GM12878 (cell line): ENCODE measurements at regions of chr5 and their contacts with region 1.

Region 1: GRCh38 chr5:33440482-33441240 is at the start of gene TARS1:
- DNase-seq: peak; percentile 100
- ATAC-seq: peak; percentile 94
- H3K4me3 ChIP-seq: peak within 1 kb of the TSS; percentile 96
- H3K27ac ChIP-seq: peak within 1 kb of the TSS; percentile 92
- H3K4me1 ChIP-seq: no peaks in the 10 kb centered on the region
- H3K27me3 ChIP-seq: no peaks in the 10 kb centered on the region
- CTCF ChIP-seq: no peak
- EP300 ChIP-seq: 0 out of 4 replicates have a peak, but pooled peaks of 1 of the 2 experiments have one; percentile 21
- POLR2A ChIP-seq: peak; percentile 95
- RAD21 ChIP-seq: no peak
- polyA plus RNA-seq, gene TARS1: 163 to 244 TPM

Region 2: GRCh38 chr5:33379757-33380156 is 60.9 kb before region 1 on chr5:
- CTCF ChIA-PET with region 1: no interaction called
- POLR2A ChIA-PET with region 1: no interaction called
- RAD21 ChIA-PET with region 1: no interaction called
- SMC1A ChIA-PET with region 1: no interaction called
- in situ Hi-C with region 1: no loop called
- intact Hi-C with region 1: no loop called
- DNase-seq: no peak
- ATAC-seq: peak; percentile 27; the same call in 1 of the 3 replicates
- H3K4me3 ChIP-seq: no peak overlapping the region
- H3K27ac ChIP-seq: no peak overlapping the region
- H3K4me1 ChIP-seq: no peaks in the 10 kb centered on the region
- H3K27me3 ChIP-seq: no peaks in the 10 kb centered on the region
- CTCF ChIP-seq: peak; percentile 34 to 54 (median 36); a peak in 5 of 6 replicates
- EP300 ChIP-seq: no peak
- POLR2A ChIP-seq: no peak
- RAD21 ChIP-seq: peak; percentile 72

Region 3: DNA sequence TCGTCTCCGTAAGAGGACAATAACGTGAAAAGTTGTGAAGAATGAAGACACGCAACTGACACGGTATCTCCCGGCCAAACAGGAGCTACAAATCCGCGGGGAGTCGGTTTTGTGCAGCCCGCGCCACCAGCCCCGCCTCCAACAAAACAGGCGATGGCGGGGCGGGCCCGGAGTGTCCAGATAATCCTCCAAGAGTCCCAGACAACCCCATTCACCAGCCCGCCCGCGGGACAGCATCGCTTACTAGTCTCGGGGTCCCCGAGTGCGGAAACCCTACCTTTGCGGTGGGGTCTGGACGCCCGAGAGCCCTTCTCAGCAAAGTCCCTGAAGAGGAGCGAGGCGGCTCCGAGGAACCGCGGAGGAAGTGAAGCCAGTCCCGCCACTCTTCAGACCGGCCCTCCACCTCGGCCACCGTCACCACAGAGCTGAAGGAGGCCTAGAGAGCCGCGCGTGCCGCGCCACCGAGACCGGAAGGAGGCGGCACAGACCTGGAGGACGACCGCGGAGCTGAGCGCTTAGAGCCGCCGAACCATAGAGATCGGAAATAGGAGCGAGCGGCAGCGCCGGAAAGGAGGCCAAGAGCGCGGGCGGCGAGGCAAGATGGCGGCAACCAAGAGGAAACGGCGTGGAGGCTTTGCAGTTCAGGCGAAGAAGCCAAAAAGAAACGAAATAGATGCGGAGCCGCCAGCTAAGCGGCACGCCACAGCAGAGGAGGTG is 1474.6 kb after region 1 on chr5 and contains the starts of genes BRIX1 and RAD1:
- CTCF ChIA-PET with region 1: no interaction called
- POLR2A ChIA-PET with region 1: no interaction called
- RAD21 ChIA-PET with region 1: no interaction called
- SMC1A ChIA-PET with region 1: no interaction called
- in situ Hi-C with region 1: loop called (anchors 10 kb)
- intact Hi-C with region 1: no loop called
- DNase-seq: peak; percentile 86
- ATAC-seq: peak; percentile 96
- H3K4me3 ChIP-seq: peak within 1 kb of the TSS; percentile 100
- H3K27ac ChIP-seq: peak within 1 kb of the TSS; percentile 90
- H3K4me1 ChIP-seq: peaks cover 6% of the 10 kb centered on the region; the same call in 1 of the 2 replicates
- H3K27me3 ChIP-seq: no peaks in the 10 kb centered on the region
- CTCF ChIP-seq: peak in 2 of 3 experiments; percentile 12 to 43; a peak in 3 of 6 replicates
- EP300 ChIP-seq: 0 out of 4 replicates have a peak, but pooled peaks of 1 of the 2 experiments have one; percentile 35
- POLR2A ChIP-seq: peak; percentile 90
- RAD21 ChIP-seq: no peak
- polyA plus RNA-seq, gene BRIX1: 58.2 to 77.4 TPM
- polyA plus RNA-seq, gene RAD1: 43.4 to 58.4 TPM